T-cell (primary cell): ENCODE measurements at regions of chr13 and their contacts with region 1.

Region 1: GRCh38 chr13:86922891-86923290 is 748.3 kb upstream of the SLITRK5 start:
- DNase-seq: no peak
- ATAC-seq: no peak
- H3K4me3 ChIP-seq: no peak overlapping the region
- H3K4me3 Mint-ChIP-seq: no peak overlapping the region
- H3K27ac ChIP-seq: no peak overlapping the region
- H3K27ac Mint-ChIP-seq: no peak overlapping the region
- H3K4me1 ChIP-seq: no peaks in the 10 kb centered on the region
- H3K4me1 Mint-ChIP-seq: no peaks in the 10 kb centered on the region
- H3K27me3 ChIP-seq: no peaks in the 10 kb centered on the region
- H3K27me3 Mint-ChIP-seq: no peaks in the 10 kb centered on the region

Region 2: GRCh38 chr13:86684402-86684801 is 238.5 kb before region 1 on chr13:
- CTCF ChIA-PET with region 1: no interaction called
- POLR2A ChIA-PET with region 1: interaction called in 1 of 2 experiments, 12 read pairs
- DNase-seq: no peak
- ATAC-seq: no peak
- H3K4me3 ChIP-seq: no peak overlapping the region
- H3K4me3 Mint-ChIP-seq: no peak overlapping the region
- H3K27ac ChIP-seq: no peak overlapping the region
- H3K27ac Mint-ChIP-seq: no peak overlapping the region
- H3K4me1 ChIP-seq: no peaks in the 10 kb centered on the region
- H3K4me1 Mint-ChIP-seq: no peaks in the 10 kb centered on the region
- H3K27me3 ChIP-seq: no peaks in the 10 kb centered on the region
- H3K27me3 Mint-ChIP-seq: no peaks in the 10 kb centered on the region